Mammary epithelial cell (primary cell): ENCODE measurements at regions of chr16 and their contacts with region 1.

Region 1: GRCh38 chr16:24471561-24472350 is 67.6 kb upstream of the RBBP6 start:
- DNase-seq: no peak
- H3K4me3 ChIP-seq: no peak overlapping the region
- H3K27ac ChIP-seq: no peak overlapping the region
- H3K4me1 ChIP-seq: no peaks in the 10 kb centered on the region
- H3K27me3 ChIP-seq: no peaks in the 10 kb centered on the region
- CTCF ChIP-seq: no peak

Region 2: DNA sequence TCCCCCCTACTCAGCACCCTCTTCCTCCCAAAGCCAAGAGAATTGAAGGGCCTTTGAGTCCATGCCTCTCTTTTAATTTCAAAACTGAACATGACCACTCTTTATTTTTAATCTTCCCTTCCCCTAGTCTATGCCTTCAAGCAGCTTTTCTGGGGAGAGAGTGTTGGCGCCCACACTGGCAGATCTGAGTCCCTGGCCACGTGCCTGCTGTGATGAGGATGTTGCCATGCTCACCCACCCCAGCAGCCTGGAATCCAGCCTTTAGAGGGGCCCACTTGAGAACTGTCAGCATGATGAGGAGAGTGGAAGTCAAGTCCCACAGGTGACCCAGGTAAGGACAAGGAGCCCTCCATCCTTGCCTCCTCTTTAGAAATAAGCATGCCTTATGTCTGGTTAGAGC is 235.9 kb before region 1 on chr16:
- CTCF ChIA-PET with region 1: no interaction called
- dilution Hi-C with region 1: no loop called
- in situ Hi-C with region 1: no loop called
- intact Hi-C with region 1: no loop called
- DNase-seq: no peak
- H3K4me3 ChIP-seq: no peak overlapping the region
- H3K27ac ChIP-seq: no peak overlapping the region
- H3K4me1 ChIP-seq: no peaks in the 10 kb centered on the region
- H3K27me3 ChIP-seq: no peaks in the 10 kb centered on the region
- CTCF ChIP-seq: no peak

Region 3: GRCh38 chr16:24430945-24431760 is 40.6 kb before region 1 on chr16:
- CTCF ChIA-PET with region 1: no interaction called
- dilution Hi-C with region 1: loop called (anchors 5 kb)
- in situ Hi-C with region 1: no loop called
- intact Hi-C with region 1: no loop called
- DNase-seq: no peak
- H3K4me3 ChIP-seq: no peak overlapping the region
- H3K27ac ChIP-seq: no peak overlapping the region
- H3K4me1 ChIP-seq: no peaks in the 10 kb centered on the region
- H3K27me3 ChIP-seq: no peaks in the 10 kb centered on the region
- CTCF ChIP-seq: no peak